ENCODE measurements at regions of chr19 and their contacts with region 1.

Region 1: GRCh38 chr19:6110360-6110977 is at the start of gene RFX2:
- DNase-seq: peak; percentile 99
- H3K4me3 ChIP-seq: peak within 1 kb of the TSS; percentile 71 to 92 (median 75)
- H3K27ac ChIP-seq: peak within 1 kb of the TSS; percentile 97
- H3K4me1 ChIP-seq: peaks cover 6% of the 10 kb centered on the region
- H3K27me3 ChIP-seq: no peaks in the 10 kb centered on the region
- CTCF ChIP-seq: no peak
- total RNA-seq, gene RFX2: 6.5 to 15.6 TPM

Region 2: GRCh38 chr19:5987077-5987818 is 123.2 kb before region 1 on chr19:
- CTCF ChIA-PET with region 1: no interaction called
- dilution Hi-C with region 1: no loop called
- in situ Hi-C with region 1: no loop called
- intact Hi-C with region 1: loop called (anchors 5 kb)
- DNase-seq: peak; percentile 61
- H3K4me3 ChIP-seq: no peak overlapping the region
- H3K27ac ChIP-seq: no peak overlapping the region
- H3K4me1 ChIP-seq: peaks cover 15% of the 10 kb centered on the region
- H3K27me3 ChIP-seq: no peaks in the 10 kb centered on the region
- CTCF ChIP-seq: peak; percentile 93 to 94

Region 3: GRCh38 chr19:6056801-6057650 is 53.4 kb before region 1 on chr19:
- CTCF ChIA-PET with region 1: no interaction called
- dilution Hi-C with region 1: no loop called
- in situ Hi-C with region 1: loop called in 1 of 2 experiments (anchors 5 kb)
- intact Hi-C with region 1: loop called (anchors 1 kb)
- DNase-seq: peak; percentile 98
- H3K4me3 ChIP-seq: peak overlapping the region; percentile 6 to 36 (median 23)
- H3K27ac ChIP-seq: peak overlapping the region; percentile 99
- H3K4me1 ChIP-seq: peaks cover 57% of the 10 kb centered on the region
- H3K27me3 ChIP-seq: no peaks in the 10 kb centered on the region
- CTCF ChIP-seq: peak in 1 of 2 donors; percentile 1

Region 4: DNA sequence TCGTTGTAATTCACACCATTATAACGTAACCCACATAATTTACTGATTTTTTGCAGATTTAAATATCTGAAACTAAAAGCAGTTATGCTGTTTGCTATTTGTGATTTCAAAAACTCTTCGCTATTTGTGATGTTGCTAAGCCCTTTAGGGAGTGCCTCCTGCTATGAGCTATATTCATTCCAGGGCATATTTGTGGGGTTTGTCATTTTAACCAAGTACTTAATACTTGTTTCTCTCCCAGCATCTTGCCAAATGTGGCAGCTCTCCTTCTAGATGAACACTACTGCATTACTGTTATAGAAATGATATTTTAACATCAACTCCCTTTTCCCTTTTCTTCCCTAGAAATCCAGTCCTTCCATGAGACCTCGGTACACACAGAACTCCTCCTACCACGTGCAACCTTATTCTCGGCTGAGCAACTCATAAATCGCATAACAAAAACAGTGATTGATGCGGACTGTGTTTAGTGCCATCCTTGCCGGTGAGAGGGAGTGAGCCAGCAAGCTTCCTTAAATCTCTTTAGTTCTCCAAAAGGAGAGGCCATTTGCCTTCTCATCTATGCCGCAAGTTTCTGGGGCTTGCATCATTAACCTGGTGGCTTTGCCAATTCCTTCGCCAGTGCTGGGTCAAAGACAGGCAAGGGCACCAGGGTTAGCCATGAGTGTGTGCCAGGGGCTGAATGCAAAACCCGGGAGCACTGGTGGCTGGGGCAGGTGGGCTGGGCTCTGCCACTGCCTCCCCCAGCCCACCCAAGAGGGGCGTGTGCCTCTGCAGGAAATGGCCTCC is 33.6 kb before region 1 on chr19:
- CTCF ChIA-PET with region 1: interaction called, 4 read pairs
- dilution Hi-C with region 1: no loop called
- in situ Hi-C with region 1: no loop called
- intact Hi-C with region 1: loop called (anchors 1 kb)
- DNase-seq: peak; percentile 76
- H3K4me3 ChIP-seq: no peak overlapping the region
- H3K27ac ChIP-seq: peak overlapping the region; percentile 94
- H3K4me1 ChIP-seq: peaks cover 14% of the 10 kb centered on the region
- H3K27me3 ChIP-seq: no peaks in the 10 kb centered on the region
- CTCF ChIP-seq: no peak

Region 5: DNA sequence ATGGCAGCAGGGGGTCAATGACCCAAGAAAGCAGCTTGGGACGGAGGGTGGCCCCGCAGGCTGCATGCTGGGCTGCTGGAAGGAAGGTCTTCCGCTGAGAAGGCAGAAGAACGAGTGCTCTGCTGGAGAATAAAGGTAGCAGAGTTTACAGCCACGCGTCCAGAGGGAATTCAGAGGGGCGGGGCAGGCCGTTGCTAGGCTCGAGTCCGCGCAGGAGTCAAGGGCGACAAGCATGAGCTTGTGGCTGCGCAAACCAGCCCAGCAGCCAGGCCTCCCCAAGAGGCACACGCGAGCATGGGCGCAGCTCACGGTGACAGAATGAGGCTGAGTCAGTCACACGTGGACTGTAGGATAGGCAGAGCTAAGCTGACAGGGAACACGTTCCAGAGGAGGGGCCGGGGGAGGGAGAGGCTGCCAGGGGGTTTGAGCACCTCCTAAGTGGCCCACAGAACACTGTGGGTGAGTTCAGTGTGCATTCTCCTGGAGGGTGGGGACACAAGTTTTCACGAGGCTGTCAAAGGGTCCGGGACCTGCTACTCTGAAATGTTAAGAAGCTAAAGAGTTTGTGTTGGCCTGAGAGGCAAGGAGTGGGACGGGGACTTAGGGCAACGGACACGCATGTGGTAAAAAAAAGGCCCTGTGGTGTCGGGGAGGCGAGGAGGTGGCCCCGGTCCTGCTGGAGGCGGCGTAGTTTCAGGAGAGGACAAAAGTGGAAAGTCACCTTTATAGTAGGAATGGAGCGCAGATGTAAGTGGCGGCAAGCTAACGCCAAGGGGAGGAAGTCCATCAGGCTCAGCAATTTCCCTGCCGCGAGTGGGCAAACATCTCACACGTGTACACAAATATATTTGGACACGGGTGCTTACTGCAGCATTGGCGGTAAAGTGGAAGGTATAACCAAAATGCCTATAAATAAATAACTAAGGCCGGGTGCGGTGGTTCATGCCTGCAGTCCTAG is 17.9 kb before region 1 on chr19:
- CTCF ChIA-PET with region 1: no interaction called
- dilution Hi-C with region 1: no loop called
- in situ Hi-C with region 1: no loop called
- intact Hi-C with region 1: loop called (anchors 2 kb)
- DNase-seq: peak; percentile 97
- H3K4me3 ChIP-seq: peak overlapping the region; percentile 30 to 50 (median 45)
- H3K27ac ChIP-seq: peak overlapping the region; percentile 99
- H3K4me1 ChIP-seq: peaks cover 42% of the 10 kb centered on the region
- H3K27me3 ChIP-seq: no peaks in the 10 kb centered on the region
- CTCF ChIP-seq: peak in 1 of 2 donors; percentile 32

Measured in mammary epithelial cell (primary cell).